GM13976 (cell line): ENCODE measurements at regions of chr11 and their contacts with region 1.

Region 1: DNA sequence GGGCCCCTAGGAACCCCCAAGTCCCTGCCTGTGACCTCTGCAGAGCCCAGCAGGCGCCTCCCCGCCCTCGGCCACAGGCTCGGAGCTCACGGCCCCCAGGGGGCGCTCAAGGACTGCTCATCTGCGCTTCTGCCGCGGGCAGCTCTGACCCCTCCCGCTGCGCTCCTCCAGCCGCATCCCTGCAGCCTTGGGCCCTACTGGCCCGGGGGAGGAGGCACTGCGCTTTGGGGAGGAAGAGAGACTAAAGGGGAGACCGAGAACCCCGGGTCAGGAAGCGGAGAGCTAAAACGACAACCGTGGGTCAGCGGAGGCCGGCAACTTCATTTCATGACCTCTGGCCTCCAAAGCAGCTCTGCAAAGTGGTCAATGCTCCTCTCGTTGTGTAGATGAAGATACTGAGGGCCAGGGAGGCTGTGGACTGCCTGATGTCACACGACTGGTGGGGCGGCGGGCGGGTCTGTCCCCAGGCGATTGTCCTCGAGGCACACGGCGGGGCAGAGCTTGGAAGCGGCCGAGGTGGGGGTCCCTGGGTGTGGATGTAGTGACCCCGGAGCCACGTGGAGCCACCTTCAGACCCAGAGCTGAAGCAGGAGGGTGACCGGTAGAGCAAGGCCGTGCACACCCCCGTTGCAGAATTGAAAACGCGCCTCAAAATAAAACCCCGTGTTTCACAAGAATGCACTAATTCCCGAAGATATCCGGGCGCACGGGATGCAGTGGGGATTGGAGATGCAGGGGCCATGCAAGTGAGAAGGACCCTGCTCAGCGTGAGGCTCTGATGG is 2.7 kb upstream of the KRTAP5-6 start:
- DNase-seq: peak; percentile 95
- CTCF ChIP-seq: peak; percentile 93

Region 2: DNA sequence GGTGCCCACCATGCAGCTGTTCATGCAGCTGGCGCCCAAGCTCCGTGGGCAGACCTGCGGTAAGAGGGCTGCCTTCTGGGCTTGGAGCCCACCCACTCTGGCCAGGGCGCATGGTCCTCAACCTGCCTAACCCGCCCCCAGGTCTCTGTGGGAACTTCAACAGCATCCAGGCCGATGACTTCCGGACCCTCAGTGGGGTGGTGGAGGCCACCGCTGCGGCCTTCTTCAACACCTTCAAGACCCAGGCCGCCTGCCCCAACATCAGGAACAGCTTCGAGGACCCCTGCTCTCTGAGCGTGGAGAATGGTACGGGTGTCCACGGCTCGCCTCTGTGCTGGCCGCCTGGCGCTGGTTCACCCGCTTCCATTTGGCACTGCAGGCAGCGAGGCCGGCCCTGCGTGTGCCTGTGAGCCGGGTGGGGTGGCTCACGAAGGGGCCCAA is 525.5 kb before region 1 on chr11:
- in situ Hi-C with region 1: no loop called
- DNase-seq: peak; percentile 15
- CTCF ChIP-seq: no peak

Region 3: DNA sequence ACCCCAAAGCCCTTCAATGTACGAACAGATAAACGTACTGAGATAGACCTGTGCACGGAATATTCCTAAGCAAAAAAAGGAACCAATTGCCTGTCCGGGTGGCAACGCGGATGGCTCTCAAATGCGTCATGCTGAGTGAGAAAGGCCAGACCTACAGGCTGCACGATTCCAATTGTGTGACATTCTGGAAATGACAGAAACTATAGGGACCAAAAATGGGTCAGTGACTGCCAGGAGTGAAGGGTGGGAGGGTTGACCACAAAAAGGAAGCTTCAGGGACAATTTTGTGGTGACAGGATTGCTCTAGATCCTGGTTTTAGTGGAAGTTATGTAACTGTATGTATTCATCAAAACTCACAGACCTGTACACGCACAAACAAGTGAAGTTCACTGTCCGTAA is 116.5 kb after region 1 on chr11:
- in situ Hi-C with region 1: loop called (anchors 10 kb)
- DNase-seq: no peak
- CTCF ChIP-seq: no peak